ENCODE measurements at regions of chr2 and their contacts with region 1.

Region 1: GRCh38 chr2:33210626-33211025 is 263.9 kb downstream of the LTBP1 start:
- DNase-seq: peak in 1 of 2 donors; percentile 65
- ATAC-seq: peak; percentile 70 to 92 (median 88)
- H3K4me3 ChIP-seq: no peak overlapping the region
- H3K27ac ChIP-seq: peak overlapping the region; percentile 46
- H3K4me1 ChIP-seq: peaks cover 6% of the 10 kb centered on the region
- H3K27me3 ChIP-seq: no peaks in the 10 kb centered on the region
- CTCF ChIP-seq: no peak

Region 2: DNA sequence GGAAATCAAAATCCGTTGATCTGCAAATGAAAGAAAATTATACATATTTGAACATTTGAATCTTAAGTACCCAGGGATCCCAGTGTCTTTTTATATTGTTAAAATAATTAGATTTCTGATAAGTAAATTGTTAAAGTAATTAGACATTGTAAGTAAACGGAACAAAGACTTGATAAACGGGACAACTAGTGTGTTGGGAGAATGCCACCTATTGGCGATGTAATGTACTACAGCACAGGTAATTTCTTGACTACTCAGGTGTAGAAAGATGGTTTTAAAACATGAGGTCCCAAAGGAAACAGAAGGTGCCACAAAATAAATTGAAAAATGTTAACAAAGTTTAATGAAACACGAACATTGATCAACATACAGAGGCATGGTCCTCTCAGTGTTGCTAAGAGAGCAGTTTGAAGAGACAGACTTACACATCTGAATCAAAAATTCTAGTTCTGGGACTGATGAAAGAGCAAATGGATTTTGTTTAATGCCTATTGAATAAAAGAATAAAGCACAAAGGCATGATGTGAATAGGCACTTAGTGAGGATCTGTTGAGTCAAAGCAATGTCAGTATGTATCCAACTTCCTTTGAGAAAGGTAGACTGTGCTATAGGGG is 162.4 kb after region 1 on chr2:
- intact Hi-C with region 1: loop called in 1 of 2 experiments (anchors 10 kb)
- DNase-seq: no peak
- ATAC-seq: peak in 3 of 4 donors; percentile 44 to 67 (median 49)
- H3K4me3 ChIP-seq: no peak overlapping the region
- H3K27ac ChIP-seq: no peak overlapping the region
- H3K4me1 ChIP-seq: no peaks in the 10 kb centered on the region
- H3K27me3 ChIP-seq: no peaks in the 10 kb centered on the region
- CTCF ChIP-seq: peak; percentile 74

Measured in psoas muscle (tissue), 8 donors.